HCT116 (cell line): ENCODE measurements at regions of chr10 and their contacts with region 1.

Region 1: GRCh38 chr10:94439275-94439861 is 37.0 kb downstream of the TBC1D12 start:
- DNase-seq: no peak
- ATAC-seq: 0 out of 2 replicates have a peak, but pooled peaks have one; percentile 30
- H3K4me3 ChIP-seq: no peak overlapping the region
- H3K27ac ChIP-seq: no peak overlapping the region
- H3K4me1 ChIP-seq: no peaks in the 10 kb centered on the region
- H3K27me3 ChIP-seq: no peaks in the 10 kb centered on the region
- CTCF ChIP-seq: no peak
- POLR2A ChIP-seq: no peak
- RAD21 ChIP-seq: no peak

Region 2: DNA sequence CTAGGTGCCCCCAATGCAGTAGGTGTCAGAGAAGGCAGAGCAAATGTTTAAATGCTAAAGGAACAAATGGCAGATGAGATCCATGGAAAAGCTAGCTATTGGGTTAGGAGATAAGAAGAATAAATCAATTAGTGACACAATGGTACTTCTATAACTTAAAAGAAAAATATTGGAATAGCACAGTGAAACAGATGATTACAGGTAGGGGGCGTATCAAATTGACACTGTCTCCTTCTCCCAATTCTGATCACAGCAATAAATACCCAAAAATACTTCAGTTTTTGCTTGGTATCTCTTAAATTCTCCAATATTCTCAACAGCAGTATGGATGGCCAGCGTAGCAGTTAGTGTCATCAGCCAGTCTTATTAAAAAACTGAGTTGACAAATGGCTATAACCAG is 742.2 kb before region 1 on chr10:
- CTCF ChIA-PET with region 1: no interaction called
- POLR2A ChIA-PET with region 1: no interaction called
- RAD21 ChIA-PET with region 1: no interaction called
- intact Hi-C with region 1: no loop called
- DNase-seq: no peak
- ATAC-seq: no peak
- H3K4me3 ChIP-seq: no peak overlapping the region
- H3K27ac ChIP-seq: no peak overlapping the region
- H3K4me1 ChIP-seq: peaks cover 0 to 8% of the 10 kb centered on the region in 2 experiments; a peak in 1 of 4 replicates
- H3K27me3 ChIP-seq: no peaks in the 10 kb centered on the region
- CTCF ChIP-seq: peak in 1 of 3 experiments; percentile 37; a peak in 1 of 6 replicates
- POLR2A ChIP-seq: no peak
- RAD21 ChIP-seq: no peak

Region 3: GRCh38 chr10:93916257-93917063 is 522.9 kb before region 1 on chr10:
- CTCF ChIA-PET with region 1: interaction called, 35 read pairs
- POLR2A ChIA-PET with region 1: no interaction called
- RAD21 ChIA-PET with region 1: interaction called in 1 of 2 experiments, 4 read pairs
- intact Hi-C with region 1: loop called (anchors 1 kb)
- DNase-seq: peak; percentile 22
- ATAC-seq: peak; percentile 78
- H3K4me3 ChIP-seq: no peak overlapping the region
- H3K27ac ChIP-seq: no peak overlapping the region
- H3K4me1 ChIP-seq: no peaks in the 10 kb centered on the region
- H3K27me3 ChIP-seq: no peaks in the 10 kb centered on the region
- CTCF ChIP-seq: peak; percentile 51 to 68 (median 60); a peak in 5 of 6 replicates
- POLR2A ChIP-seq: no peak
- RAD21 ChIP-seq: peak; percentile 70

Region 4: DNA sequence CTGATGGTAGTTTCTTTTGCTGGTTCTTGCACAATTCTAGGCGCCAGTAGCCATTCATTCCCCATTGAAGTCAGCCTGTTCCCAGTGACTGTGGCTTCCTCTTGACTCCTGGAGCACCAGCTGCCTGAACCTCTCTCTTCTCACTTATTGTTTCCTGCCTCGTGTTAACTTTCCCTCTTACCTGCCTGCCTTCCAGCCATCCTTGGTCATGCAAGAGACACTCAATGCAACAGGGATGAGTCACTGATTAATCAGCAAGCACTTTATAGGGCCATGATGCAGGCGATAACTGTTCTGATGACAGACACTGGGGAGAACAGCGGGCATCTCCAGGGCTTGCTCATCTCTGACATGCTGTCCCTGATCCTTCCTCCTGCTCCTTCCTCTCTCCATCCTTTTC is 323.6 kb before region 1 on chr10:
- CTCF ChIA-PET with region 1: no interaction called
- POLR2A ChIA-PET with region 1: no interaction called
- RAD21 ChIA-PET with region 1: no interaction called
- intact Hi-C with region 1: no loop called
- DNase-seq: peak; percentile 40
- ATAC-seq: peak; percentile 54
- H3K4me3 ChIP-seq: no peak overlapping the region
- H3K27ac ChIP-seq: no peak overlapping the region
- H3K4me1 ChIP-seq: peaks cover 0 to 7% of the 10 kb centered on the region in 2 experiments; a peak in 2 of 4 replicates
- H3K27me3 ChIP-seq: no peaks in the 10 kb centered on the region
- CTCF ChIP-seq: no peak
- POLR2A ChIP-seq: no peak
- RAD21 ChIP-seq: no peak

Region 5: GRCh38 chr10:94183666-94184264 is 255.6 kb before region 1 on chr10:
- CTCF ChIA-PET with region 1: no interaction called
- POLR2A ChIA-PET with region 1: no interaction called
- RAD21 ChIA-PET with region 1: no interaction called
- intact Hi-C with region 1: no loop called
- DNase-seq: no peak
- ATAC-seq: no peak
- H3K4me3 ChIP-seq: no peak overlapping the region
- H3K27ac ChIP-seq: no peak overlapping the region
- H3K4me1 ChIP-seq: peaks cover 0 to 6% of the 10 kb centered on the region in 2 experiments; a peak in 1 of 4 replicates
- H3K27me3 ChIP-seq: no peaks in the 10 kb centered on the region
- CTCF ChIP-seq: no peak
- POLR2A ChIP-seq: no peak
- RAD21 ChIP-seq: no peak

Region 6: DNA sequence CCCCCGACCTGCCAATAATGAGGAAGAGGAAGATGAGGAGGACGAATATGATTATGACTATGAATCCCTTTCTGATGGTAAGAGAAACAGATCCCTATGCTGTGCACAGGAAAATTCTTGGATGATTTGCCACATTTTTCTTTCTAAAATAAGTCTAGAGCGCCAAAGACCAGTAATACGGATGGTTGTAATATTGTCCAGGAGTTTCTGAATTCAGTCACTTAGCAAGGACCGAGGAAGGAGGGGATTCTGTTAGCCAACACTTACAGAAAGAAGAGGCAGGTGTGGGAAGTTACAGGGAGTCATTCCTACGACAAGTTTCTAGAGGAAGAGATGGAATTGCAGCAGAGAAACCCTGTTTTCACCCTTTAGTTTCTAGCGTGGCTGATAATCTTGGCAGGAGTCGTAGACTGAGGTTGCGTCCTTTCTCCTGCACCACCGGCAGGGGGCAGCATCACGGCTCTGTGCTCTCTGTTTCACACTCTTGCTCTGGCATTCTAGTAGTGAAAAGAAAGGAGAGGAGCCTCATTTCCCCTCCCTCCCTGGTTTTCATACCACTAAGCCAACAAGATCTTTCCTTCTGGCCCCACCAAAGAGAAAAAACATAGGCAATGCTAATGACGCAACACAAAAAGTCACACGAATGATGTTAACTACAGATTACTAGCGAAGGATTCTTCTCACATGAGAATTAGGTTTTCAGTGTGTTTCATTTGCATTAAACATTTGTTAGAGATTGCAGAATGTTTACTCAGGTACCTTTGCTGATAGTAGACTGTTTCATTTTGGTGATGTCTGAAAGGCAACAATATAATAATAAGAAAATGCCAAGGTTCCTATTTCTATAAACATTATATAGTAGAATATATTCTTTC is 159.3 kb before region 1 on chr10:
- CTCF ChIA-PET with region 1: interaction called, 7 read pairs
- POLR2A ChIA-PET with region 1: no interaction called
- RAD21 ChIA-PET with region 1: no interaction called
- intact Hi-C with region 1: loop called (anchors 1 kb)
- DNase-seq: peak; percentile 24
- ATAC-seq: peak; percentile 99
- H3K4me3 ChIP-seq: no peak overlapping the region
- H3K27ac ChIP-seq: no peak overlapping the region
- H3K4me1 ChIP-seq: no peaks in the 10 kb centered on the region
- H3K27me3 ChIP-seq: no peaks in the 10 kb centered on the region
- CTCF ChIP-seq: peak; percentile 60 to 96 (median 92); a peak in 5 of 6 replicates
- POLR2A ChIP-seq: no peak
- RAD21 ChIP-seq: peak; percentile 66

Region 7: GRCh38 chr10:94362360-94363250 is 76.8 kb before region 1 on chr10 and contains the start of gene NOC3L:
- CTCF ChIA-PET with region 1: interaction called, 3 read pairs
- POLR2A ChIA-PET with region 1: no interaction called
- RAD21 ChIA-PET with region 1: no interaction called
- intact Hi-C with region 1: loop called (anchors 5 kb)
- DNase-seq: peak; percentile 93
- ATAC-seq: peak; percentile 99
- H3K4me3 ChIP-seq: peak within 1 kb of the TSS; percentile 82 to 93
- H3K27ac ChIP-seq: peak within 1 kb of the TSS; percentile 64
- H3K4me1 ChIP-seq: peaks cover 18 to 33% of the 10 kb centered on the region in 2 experiments
- H3K27me3 ChIP-seq: no peaks in the 10 kb centered on the region
- CTCF ChIP-seq: peak; percentile 65 to 98 (median 73)
- POLR2A ChIP-seq: peak; percentile 86
- RAD21 ChIP-seq: no peak; the same call in none of the 2 replicates
- total RNA-seq, gene NOC3L: 45.5 TPM

Region 8: DNA sequence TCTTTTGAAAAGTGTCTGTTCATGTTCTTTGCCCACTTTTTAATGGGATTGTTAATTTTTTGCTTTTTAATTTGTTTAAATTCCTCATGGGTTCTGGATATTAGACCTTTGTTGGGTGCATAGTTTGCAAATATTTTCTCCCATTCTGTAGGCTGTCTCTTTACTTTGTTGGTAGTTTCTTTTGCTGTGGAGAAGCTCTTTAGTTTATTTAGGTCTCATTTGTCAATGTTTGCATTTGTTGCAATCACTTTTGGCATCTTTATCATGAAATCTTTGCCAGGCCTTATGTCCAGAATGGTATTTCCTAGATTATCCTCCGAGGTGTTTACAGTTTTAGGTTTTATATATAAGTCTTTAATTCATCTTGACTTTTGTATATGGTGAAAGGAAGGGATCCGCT is 299.2 kb after region 1 on chr10:
- CTCF ChIA-PET with region 1: no interaction called
- POLR2A ChIA-PET with region 1: no interaction called
- RAD21 ChIA-PET with region 1: no interaction called
- intact Hi-C with region 1: no loop called
- DNase-seq: no peak
- ATAC-seq: no peak
- H3K4me3 ChIP-seq: no peak overlapping the region
- H3K27ac ChIP-seq: no peak overlapping the region
- H3K4me1 ChIP-seq: no peaks in the 10 kb centered on the region
- H3K27me3 ChIP-seq: no peaks in the 10 kb centered on the region
- CTCF ChIP-seq: no peak
- POLR2A ChIP-seq: no peak
- RAD21 ChIP-seq: no peak